Sigmoid colon (tissue), 7 donors: ENCODE measurements at regions of chr12 and their contacts with region 1.

Region 1: DNA sequence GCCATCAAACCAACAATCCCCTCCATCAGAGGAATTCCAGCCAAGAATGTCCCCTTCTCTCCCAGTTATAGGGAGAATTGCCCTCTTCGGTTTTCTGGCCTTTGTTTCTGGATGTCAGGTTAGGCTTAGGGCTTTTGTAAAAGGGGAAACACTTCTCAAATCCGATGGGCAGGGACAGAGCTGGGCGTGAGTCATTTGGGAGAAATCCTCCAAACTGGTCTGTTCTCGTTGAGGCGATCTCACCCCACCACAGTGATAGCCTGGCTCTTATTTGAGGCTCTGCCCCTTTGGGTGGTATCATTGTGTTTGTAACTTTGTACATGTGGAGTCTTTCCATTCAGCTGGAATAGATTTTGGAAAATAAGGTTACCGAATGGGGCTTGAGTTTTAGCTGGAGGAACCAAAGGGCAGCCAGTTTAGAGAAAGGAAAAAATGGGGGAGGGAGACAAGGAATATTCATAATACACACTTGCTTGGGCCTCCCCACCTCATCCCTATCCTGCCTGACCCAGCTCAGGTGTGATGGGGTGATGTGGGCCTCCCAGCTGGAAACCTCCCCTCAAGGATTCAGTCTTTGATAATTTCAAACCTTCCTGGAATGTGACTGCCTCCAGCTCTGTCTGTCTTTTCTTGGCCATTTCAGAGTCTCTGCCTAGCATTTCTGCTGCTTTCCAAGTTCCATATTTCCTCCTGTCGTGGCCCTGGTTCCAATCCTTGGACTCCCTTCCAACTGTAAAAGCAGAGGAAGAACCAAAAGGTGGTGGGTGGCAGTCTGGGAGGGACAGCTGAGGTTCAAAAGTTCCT is 7.5 kb downstream of the HOXC4 start:
- DNase-seq: no peak
- H3K4me3 ChIP-seq: no peak overlapping the region
- H3K27ac ChIP-seq: no peak overlapping the region
- H3K4me1 ChIP-seq: no peaks in the 10 kb centered on the region
- H3K27me3 ChIP-seq: peaks cover 0 to 36% (median 15%) of the 10 kb centered on the region in 3 donors
- CTCF ChIP-seq: no peak
- EP300 ChIP-seq: no peak
- POLR2A ChIP-seq: no peak

Region 2: GRCh38 chr12:54044425-54045103 is 16.6 kb before region 1 on chr12:
- intact Hi-C with region 1: loop called (anchors 1 kb)
- DNase-seq: no peak
- H3K4me3 ChIP-seq: no peak overlapping the region
- H3K27ac ChIP-seq: no peak overlapping the region
- H3K4me1 ChIP-seq: peaks cover 0 to 12% (median 10%) of the 10 kb centered on the region in 4 donors
- H3K27me3 ChIP-seq: peaks cover 51 to 99% (median 98%) of the 10 kb centered on the region in 3 donors
- CTCF ChIP-seq: no peak
- EP300 ChIP-seq: no peak
- POLR2A ChIP-seq: no peak